ENCODE measurements at regions of chr17 and their contacts with region 1.

Region 1: DNA sequence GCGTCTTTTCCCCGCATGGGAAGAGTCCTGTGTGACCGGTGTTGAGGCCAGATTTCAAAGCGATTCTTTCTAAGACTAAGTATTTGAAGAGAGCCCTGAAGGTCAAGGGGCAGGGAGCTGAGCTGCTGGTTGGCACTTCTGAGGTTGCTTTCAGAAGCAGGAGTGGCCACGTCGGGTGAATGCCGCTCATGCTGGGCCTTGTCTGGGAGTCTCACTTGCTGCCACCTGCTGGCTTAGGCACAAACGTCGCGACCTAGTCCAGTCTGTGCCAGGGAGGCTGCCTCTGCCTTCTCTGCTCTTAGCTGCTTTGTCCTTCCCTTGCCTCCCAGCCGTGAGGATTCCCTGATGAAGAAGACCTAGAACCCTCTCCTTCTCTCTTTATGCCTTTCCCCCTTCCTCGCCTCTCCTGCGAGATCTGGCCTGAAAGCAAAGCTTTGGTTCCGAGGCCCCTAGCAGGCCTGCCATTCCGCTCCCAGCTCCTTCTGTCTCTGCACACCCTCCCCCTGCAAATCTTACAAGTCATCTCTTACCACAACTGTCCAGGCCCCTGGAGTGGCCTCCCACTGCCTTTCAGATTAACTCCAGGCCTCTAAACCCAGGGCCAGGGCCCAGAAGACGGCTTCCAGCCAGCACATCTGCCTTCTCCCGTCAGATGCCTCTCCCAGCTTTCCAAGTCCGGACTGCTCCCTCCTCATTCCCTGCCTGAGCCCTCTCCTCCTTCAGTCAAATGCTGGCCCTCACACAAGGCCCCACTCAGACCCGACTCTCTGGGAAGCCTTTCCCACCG is 11.4 kb downstream of the CTNS start:
- DNase-seq: no peak
- ATAC-seq: peak; percentile 29
- H3K4me3 Mint-ChIP-seq: no peak overlapping the region
- H3K27ac Mint-ChIP-seq: no peak overlapping the region
- H3K4me1 Mint-ChIP-seq: peaks cover 30% of the 10 kb centered on the region
- H3K27me3 Mint-ChIP-seq: no peaks in the 10 kb centered on the region
- CTCF ChIP-seq: no peak

Region 2: DNA sequence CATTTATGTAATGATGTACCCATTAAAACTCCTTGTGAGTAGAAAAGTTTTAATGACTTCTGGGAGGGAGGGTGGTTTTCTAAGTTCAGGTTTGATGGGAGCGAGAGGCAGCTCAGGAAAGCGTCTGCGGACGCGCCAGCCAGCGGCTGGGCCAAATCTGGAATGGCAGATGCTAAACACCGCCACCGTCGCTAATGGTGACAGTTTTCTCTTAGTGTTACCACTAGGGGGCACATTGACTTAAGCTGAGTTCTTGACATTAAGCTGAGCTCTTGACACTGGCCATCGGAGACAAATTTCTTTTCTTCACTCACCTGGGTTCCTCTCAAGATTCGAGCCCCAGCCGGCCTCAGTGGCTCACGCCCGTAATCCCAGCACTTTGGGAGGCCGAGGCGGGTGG is 45.5 kb before region 1 on chr17:
- CTCF ChIA-PET with region 1: interaction called, 5 read pairs
- POLR2A ChIA-PET with region 1: no interaction called
- intact Hi-C with region 1: loop called (anchors 1 kb)
- DNase-seq: no peak
- ATAC-seq: peak; percentile 58
- H3K4me3 Mint-ChIP-seq: no peak overlapping the region
- H3K27ac Mint-ChIP-seq: no peak overlapping the region
- H3K4me1 Mint-ChIP-seq: peaks cover 4% of the 10 kb centered on the region
- H3K27me3 Mint-ChIP-seq: no peaks in the 10 kb centered on the region
- CTCF ChIP-seq: no peak

Region 3: DNA sequence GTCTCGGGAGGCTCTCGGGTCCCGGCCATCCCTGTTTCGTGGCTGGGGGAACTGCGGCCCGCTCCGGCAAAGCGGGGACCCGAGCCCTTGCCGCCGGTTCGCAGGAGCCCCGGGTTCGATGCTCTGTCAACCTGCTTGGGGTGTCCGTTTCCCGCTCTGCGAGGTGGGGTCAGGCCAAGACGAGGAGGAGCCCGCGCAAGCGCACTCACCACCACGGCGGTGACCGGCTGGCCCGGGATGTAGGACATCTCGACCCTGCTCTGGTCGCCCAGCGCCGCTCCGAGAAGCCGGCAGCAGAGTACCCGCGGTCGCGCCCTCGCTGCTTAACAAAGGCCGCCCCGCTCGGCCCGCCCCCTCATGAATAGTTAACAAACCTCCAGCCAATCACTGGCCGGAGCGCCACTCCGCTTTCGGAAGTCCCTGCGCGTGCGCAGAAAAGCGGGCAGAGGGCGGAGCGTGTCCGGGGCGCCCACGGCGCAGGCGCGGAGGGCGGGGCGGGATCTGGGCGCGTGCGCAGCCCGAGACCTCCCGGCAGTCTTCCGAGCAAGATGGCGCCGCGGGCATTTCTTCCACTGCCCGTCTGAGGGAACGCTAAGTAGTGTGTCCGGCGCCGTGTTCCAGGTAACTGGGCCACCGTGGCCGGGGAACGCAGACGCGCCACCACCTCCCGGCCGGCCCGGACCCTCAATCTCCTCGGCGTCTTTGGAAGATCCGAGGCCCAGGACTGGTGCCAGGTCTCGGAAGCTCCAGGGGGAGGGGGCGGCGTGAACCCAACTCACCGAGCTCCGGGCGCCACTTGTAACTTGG is 20.5 kb after region 1 on chr17 and contains the starts of genes EMC6 and TAX1BP3:
- CTCF ChIA-PET with region 1: no interaction called
- POLR2A ChIA-PET with region 1: interaction called, 11 read pairs
- intact Hi-C with region 1: no loop called
- DNase-seq: peak; percentile 100
- ATAC-seq: peak; percentile 88
- H3K4me3 Mint-ChIP-seq: peak within 1 kb of the TSS; percentile 95
- H3K27ac Mint-ChIP-seq: peak within 1 kb of the TSS; percentile 92
- H3K4me1 Mint-ChIP-seq: peaks cover 21% of the 10 kb centered on the region
- H3K27me3 Mint-ChIP-seq: no peaks in the 10 kb centered on the region
- CTCF ChIP-seq: no peak
- total RNA-seq, gene EMC6: 33.8 and 38.0 TPM in 2 replicates
- total RNA-seq, gene TAX1BP3: 15.1 and 16.4 TPM in 2 replicates